Activated T-helper 2 cell treated with anti-CD3 and anti-CD28 coated beads, Interferon-gamma antibody, Interleukin-2, Interleukin-4, amounts not matched to agents 10 μg/mL and 5 μg/mL and 100 μg/mL, durations not matched to agents 14 hours and 24 hours and 36 hours (primary cell): ENCODE measurements at regions of chr2 and their contacts with region 1.

Region 1: DNA sequence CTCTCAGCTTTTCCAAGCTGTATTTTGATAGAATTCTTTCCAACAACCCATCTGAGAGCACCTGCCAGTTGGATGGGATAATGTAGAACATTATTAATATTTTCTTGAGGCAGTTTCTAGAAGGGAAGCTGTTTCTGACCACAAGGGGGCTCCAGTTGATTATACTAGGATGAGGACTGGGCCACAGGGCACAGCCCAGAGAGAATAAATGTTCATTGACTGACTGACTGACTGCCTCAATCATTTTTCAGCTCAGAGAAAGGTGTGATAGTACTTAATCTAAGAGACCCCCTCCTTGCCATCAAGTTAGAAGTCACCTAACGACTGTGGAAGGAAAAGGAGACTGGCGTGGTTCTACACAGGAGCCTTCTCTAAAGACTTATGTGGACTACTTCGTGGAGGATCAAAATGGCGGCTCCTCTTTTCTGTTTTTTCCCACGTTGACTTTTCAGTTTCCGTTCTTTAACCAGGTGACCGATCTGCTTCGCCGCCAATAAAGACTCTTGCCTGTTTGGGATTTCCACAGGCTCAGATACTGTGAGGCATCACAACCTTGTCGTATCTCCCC is 31.9 kb upstream of the CREG2 start:
- DNase-seq: peak; percentile 33
- H3K4me3 Mint-ChIP-seq: no peak overlapping the region
- H3K27ac Mint-ChIP-seq: no peak overlapping the region
- H3K4me1 Mint-ChIP-seq: peaks cover 1% of the 10 kb centered on the region
- H3K27me3 Mint-ChIP-seq: no peaks in the 10 kb centered on the region

Region 2: DNA sequence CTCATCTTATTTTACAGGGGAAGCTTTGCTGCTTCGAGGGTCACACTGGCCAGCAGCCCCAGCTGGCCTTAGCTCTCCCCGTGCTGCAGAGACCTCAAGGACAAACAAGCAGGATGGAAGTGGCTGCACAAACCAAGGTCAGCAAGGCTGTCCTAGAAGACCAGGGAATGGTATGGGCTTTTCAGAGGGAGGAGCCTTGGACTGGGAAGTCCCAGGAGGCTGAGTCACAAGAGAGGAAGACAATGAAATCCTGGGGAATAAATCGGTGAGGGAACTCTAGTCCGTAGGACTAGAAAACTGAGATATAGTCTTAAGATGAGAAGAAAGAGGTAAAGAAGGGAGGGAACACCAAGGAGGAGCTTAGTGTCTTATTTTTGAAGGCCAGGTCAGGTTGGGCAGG is 47.5 kb before region 1 on chr2:
- intact Hi-C with region 1: no loop called
- DNase-seq: no peak
- H3K4me3 Mint-ChIP-seq: no peak overlapping the region
- H3K27ac Mint-ChIP-seq: no peak overlapping the region
- H3K4me1 Mint-ChIP-seq: peaks cover 5% of the 10 kb centered on the region
- H3K27me3 Mint-ChIP-seq: peaks cover 7% of the 10 kb centered on the region

Region 3: GRCh38 chr2:101382442-101382841 is 36.7 kb before region 1 on chr2:
- intact Hi-C with region 1: no loop called
- DNase-seq: no peak
- H3K4me3 Mint-ChIP-seq: no peak overlapping the region
- H3K27ac Mint-ChIP-seq: no peak overlapping the region
- H3K4me1 Mint-ChIP-seq: no peaks in the 10 kb centered on the region
- H3K27me3 Mint-ChIP-seq: peaks cover 43% of the 10 kb centered on the region

Region 4: DNA sequence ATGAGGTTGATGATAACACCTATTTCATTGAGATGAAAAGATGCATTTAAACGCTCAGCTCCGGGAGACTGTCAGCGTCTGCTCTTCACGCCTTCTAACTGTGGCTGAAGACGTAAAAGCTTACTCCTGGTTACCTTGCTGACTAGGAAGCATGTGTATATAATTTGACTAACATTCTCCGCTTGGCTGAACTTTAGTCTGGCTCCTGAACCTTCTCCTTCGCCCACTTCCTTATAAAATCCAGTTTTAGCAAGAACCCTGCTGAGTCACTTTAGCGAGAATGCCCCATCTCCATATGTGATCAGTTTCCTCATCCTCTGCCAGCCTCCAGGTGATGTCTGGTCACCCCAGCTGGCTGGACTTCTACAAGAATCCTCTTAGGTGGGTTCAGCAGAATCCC is 19.1 kb before region 1 on chr2:
- intact Hi-C with region 1: no loop called
- DNase-seq: no peak
- H3K4me3 Mint-ChIP-seq: no peak overlapping the region
- H3K27ac Mint-ChIP-seq: no peak overlapping the region
- H3K4me1 Mint-ChIP-seq: peaks cover 3% of the 10 kb centered on the region
- H3K27me3 Mint-ChIP-seq: peaks cover 2% of the 10 kb centered on the region

Region 5: GRCh38 chr2:101679037-101679726 is 260.0 kb after region 1 on chr2:
- intact Hi-C with region 1: no loop called
- DNase-seq: no peak
- H3K4me3 Mint-ChIP-seq: no peak overlapping the region
- H3K27ac Mint-ChIP-seq: no peak overlapping the region
- H3K4me1 Mint-ChIP-seq: peaks cover 4% of the 10 kb centered on the region
- H3K27me3 Mint-ChIP-seq: no peaks in the 10 kb centered on the region

Region 6: DNA sequence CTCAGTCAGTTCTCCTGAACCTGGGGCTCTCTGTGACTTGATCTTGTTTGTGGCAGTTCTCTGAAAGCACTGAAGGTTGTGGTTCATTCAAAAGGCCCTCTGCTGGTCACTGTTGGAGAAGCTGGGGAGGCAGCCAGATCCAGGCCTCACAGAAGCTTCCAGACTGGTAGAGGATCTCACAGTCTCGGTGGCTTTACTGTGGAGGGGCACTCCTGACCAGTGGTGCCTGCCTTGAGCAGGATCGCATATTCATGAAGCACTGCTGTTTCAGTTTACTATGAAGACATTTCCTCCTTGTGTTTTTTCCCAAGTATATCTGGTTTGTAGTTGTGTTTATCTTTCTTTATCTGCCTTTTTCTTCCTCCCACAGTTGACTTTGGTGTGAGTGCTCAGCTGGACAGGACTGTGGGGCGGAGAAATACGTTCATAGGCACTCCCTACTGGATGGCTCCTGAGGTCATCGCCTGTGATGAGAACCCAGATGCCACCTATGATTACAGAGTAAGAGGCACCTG is 412.2 kb after region 1 on chr2:
- intact Hi-C with region 1: loop called (anchors 1 kb)
- DNase-seq: peak; percentile 33
- H3K4me3 Mint-ChIP-seq: no peak overlapping the region
- H3K27ac Mint-ChIP-seq: peak overlapping the region; percentile 61
- H3K4me1 Mint-ChIP-seq: peaks cover 50% of the 10 kb centered on the region
- H3K27me3 Mint-ChIP-seq: no peaks in the 10 kb centered on the region

Region 7: GRCh38 chr2:101873543-101873942 is 454.4 kb after region 1 on chr2:
- intact Hi-C with region 1: loop called (anchors 1 kb)
- DNase-seq: no peak
- H3K4me3 Mint-ChIP-seq: no peak overlapping the region
- H3K27ac Mint-ChIP-seq: no peak overlapping the region
- H3K4me1 Mint-ChIP-seq: peaks cover 8% of the 10 kb centered on the region
- H3K27me3 Mint-ChIP-seq: no peaks in the 10 kb centered on the region

Region 8: DNA sequence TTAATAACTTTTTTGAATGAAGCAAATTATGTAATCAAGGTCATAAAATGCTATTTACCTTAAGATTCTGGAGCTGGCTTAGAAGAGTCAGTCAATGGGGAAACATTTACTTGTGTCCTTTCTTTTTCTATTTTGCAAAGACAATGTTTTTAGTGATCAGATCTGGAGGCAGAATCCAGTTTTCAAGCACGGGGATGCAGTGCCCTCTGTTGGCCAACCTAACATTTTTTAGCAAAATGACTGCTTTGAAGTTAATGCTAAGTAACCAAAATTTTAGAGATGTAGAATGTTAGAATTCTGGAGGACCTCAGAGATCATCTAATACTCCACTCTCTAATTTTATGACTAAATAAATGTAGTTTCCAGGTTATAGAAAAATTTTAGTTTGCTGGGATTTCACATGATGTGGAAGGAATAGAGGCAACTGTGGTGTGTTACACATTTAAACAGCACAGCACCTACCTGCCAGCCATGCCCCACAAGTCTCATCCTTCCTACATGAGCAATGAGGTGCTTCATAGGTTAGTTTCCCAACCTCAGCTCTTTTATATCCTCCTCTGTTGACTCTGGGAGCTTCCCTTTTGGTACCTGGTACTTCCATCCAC is 1030.3 kb after region 1 on chr2:
- intact Hi-C with region 1: loop called (anchors 5 kb)
- DNase-seq: peak; percentile 50
- H3K4me3 Mint-ChIP-seq: no peak overlapping the region
- H3K27ac Mint-ChIP-seq: no peak overlapping the region
- H3K4me1 Mint-ChIP-seq: peaks cover 8% of the 10 kb centered on the region
- H3K27me3 Mint-ChIP-seq: no peaks in the 10 kb centered on the region